A549 (cell line): ENCODE measurements at regions of chr11 and their contacts with region 1.

Region 1: GRCh38 chr11:65013692-65014145 is 241 bp upstream of the ARL2 start:
- DNase-seq: peak in 1 of 2 experiments; percentile 94
- ATAC-seq: peak; percentile 90 to 92
- H3K4me3 ChIP-seq: peak overlapping the region; percentile 65
- H3K27ac ChIP-seq: peak overlapping the region; percentile 95 to 97
- H3K4me1 ChIP-seq: peaks cover 26% of the 10 kb centered on the region
- CTCF ChIP-seq: no peak; the same call in 1 of the 3 replicates
- EP300 ChIP-seq: no peak
- POLR2A ChIP-seq: peak; percentile 41
- RAD21 ChIP-seq: no peak; a peak in 2 of 5 replicates

Region 2: DNA sequence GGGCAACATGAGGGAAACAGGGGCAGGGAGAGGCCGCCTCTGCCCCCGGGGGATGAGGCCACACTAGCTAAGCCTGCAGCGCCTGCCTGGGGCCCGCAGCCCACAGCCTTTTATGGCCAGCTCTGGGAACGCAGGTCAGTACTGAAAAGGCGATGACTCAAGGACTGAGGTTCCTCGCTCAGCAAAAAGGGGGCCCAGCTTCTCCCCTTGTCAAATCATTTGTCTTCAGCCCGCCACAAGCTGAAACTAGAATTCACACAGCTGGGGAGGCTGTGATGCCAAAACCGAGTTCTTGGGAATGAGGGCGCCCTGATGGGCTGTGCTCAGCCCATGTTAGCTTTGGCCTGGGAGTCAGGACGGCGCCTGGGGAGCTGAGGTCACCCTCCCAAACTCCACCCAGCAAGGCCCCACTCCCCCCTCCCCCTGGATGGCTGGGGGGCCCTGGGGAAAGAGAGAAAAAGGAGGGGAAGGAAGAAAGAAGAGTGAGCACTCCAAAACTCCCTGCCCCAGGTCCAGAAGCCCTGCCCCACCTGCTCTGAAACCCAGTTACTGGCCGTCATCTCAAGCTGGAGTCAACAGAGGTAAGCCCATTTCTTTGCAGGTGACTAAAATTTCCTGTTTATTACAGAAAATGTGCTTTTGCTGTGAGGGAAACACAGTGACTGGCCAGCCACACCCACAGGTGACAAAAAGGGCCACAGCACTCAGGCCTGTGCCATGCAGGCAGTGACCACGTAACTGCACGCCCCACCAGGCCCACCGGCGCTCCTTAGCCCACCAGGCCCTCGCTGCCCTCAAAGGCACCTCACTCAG is 149.0 kb before region 1 on chr11:
- CTCF ChIA-PET with region 1: interaction called, 11 read pairs
- POLR2A ChIA-PET with region 1: no interaction called
- DNase-seq: no peak
- ATAC-seq: no peak
- H3K4me3 ChIP-seq: no peak overlapping the region
- H3K27ac ChIP-seq: peak overlapping the region; percentile 22 to 73; a peak in 5 of 6 replicates
- H3K4me1 ChIP-seq: peaks cover 54% of the 10 kb centered on the region
- CTCF ChIP-seq: no peak
- EP300 ChIP-seq: no peak
- POLR2A ChIP-seq: no peak
- RAD21 ChIP-seq: no peak

Region 3: GRCh38 chr11:64900263-64900678 is 113.4 kb before region 1 on chr11:
- CTCF ChIA-PET with region 1: interaction called, 11 read pairs
- POLR2A ChIA-PET with region 1: no interaction called
- DNase-seq: peak; percentile 46 to 59
- ATAC-seq: peak in 1 of 2 experiments; percentile 33; a peak in 2 of 6 replicates
- H3K4me3 ChIP-seq: no peak overlapping the region
- H3K27ac ChIP-seq: peak overlapping the region in 1 of 2 experiments; percentile 64; a peak in 3 of 6 replicates
- H3K4me1 ChIP-seq: peaks cover 4% of the 10 kb centered on the region; the same call in 2 of the 3 replicates
- CTCF ChIP-seq: no peak
- EP300 ChIP-seq: no peak
- POLR2A ChIP-seq: no peak
- RAD21 ChIP-seq: no peak

Region 4: GRCh38 chr11:64947208-64947814 is 66.4 kb before region 1 on chr11:
- CTCF ChIA-PET with region 1: interaction called, 15 read pairs
- POLR2A ChIA-PET with region 1: no interaction called
- DNase-seq: peak in 1 of 2 experiments; percentile 27
- ATAC-seq: peak; percentile 56 to 78; a peak in 5 of 6 replicates
- H3K4me3 ChIP-seq: no peak overlapping the region
- H3K27ac ChIP-seq: no peak overlapping the region
- H3K4me1 ChIP-seq: no peaks in the 10 kb centered on the region
- CTCF ChIP-seq: no peak
- EP300 ChIP-seq: no peak
- POLR2A ChIP-seq: no peak
- RAD21 ChIP-seq: no peak

Region 5: DNA sequence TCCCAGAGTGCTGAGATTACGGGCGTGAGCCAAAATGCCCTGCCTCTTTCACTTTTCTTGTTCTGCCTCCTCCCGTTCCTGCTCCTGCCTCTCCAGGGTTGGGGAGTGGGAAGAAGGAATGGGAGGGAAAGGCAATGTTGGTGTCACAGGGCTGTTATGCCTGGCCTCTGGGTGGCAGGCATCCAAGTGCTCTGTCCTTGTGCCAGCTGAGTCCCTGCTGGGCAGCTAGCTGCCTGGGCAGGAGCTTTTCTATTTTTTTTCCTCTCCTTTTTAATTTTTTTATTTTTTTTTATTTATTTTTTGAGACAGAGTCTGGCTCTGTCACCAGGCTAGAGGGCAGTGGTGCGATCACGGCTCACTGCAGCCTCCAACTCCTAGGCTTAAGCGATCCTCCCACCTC is 23.2 kb after region 1 on chr11:
- CTCF ChIA-PET with region 1: interaction called, 60 read pairs
- POLR2A ChIA-PET with region 1: no interaction called
- DNase-seq: no peak
- ATAC-seq: no peak
- H3K4me3 ChIP-seq: no peak overlapping the region
- H3K27ac ChIP-seq: no peak overlapping the region
- H3K4me1 ChIP-seq: peaks cover 6% of the 10 kb centered on the region; the same call in 2 of the 3 replicates
- CTCF ChIP-seq: no peak
- EP300 ChIP-seq: no peak
- POLR2A ChIP-seq: no peak
- RAD21 ChIP-seq: no peak

Region 6: DNA sequence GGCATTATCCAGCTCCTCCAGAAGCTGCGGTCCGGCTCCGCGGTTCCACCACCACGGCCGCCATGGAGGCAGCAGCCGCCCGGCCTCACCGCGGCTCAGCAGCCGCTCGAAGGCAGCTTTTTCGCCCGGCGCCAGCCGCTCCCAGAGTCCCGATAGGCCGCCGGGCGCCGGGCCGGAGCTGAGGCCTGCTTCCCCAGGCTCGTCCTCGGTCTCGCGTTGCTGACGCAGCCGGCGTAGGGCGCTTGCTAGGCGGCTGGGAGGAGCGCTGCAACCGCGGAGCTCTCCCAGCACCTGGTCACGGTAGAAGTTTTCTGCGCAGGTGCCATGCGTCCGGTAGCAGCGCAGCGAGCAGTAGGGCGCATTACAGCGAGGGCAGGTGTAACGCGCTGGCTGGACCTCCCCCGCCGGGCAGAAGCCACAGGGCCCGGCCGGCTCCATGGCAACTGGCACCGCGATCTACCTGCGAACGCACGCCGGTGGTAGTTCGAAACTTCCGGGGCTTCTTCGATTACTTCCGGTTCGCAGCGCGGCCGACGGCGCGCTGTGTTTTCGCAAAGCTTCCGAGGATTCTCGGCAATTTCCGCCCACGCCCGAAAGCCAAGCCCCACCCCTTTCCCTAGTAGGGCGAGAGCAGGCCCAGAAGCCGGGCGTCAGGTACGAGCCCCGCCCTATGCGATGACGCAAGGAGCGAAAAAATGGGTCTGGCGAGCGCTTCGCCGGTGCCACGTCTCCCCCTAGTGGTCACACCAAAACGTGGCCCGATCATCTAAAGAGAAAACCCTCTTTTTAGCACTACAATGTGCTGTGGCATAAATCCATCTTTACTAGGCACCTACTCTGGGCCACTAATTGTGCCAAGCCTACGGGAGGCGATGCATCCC is 103.7 kb after region 1 on chr11 and contains the start of gene ZNHIT2:
- CTCF ChIA-PET with region 1: interaction called, 42 read pairs
- POLR2A ChIA-PET with region 1: no interaction called
- DNase-seq: peak; percentile 82 to 98
- ATAC-seq: peak; percentile 55 to 74
- H3K4me3 ChIP-seq: peak within 1 kb of the TSS; percentile 86
- H3K27ac ChIP-seq: peak within 1 kb of the TSS; percentile 93
- H3K4me1 ChIP-seq: peaks cover 34% of the 10 kb centered on the region; the same call in 2 of the 3 replicates
- CTCF ChIP-seq: peak; percentile 88
- EP300 ChIP-seq: no peak
- POLR2A ChIP-seq: peak; percentile 82
- RAD21 ChIP-seq: peak; percentile 80 to 83
- polyA plus RNA-seq, gene ZNHIT2: 5.5 and 6.0 TPM in 2 replicates

Region 7: GRCh38 chr11:65274735-65275682 is 261.3 kb after region 1 on chr11:
- CTCF ChIA-PET with region 1: no interaction called
- POLR2A ChIA-PET with region 1: no interaction called
- DNase-seq: peak; percentile 66 to 85
- ATAC-seq: peak; percentile 88 to 89
- H3K4me3 ChIP-seq: no peak overlapping the region
- H3K27ac ChIP-seq: peak overlapping the region; percentile 23 to 69; a peak in 4 of 6 replicates
- H3K4me1 ChIP-seq: peaks cover 48% of the 10 kb centered on the region
- CTCF ChIP-seq: peak; percentile 96
- EP300 ChIP-seq: no peak
- POLR2A ChIP-seq: no peak
- RAD21 ChIP-seq: peak; percentile 99